Mucosa of descending colon (tissue), 3 donors: ENCODE measurements at regions of chr10 and their contacts with region 1.

Region 1: DNA sequence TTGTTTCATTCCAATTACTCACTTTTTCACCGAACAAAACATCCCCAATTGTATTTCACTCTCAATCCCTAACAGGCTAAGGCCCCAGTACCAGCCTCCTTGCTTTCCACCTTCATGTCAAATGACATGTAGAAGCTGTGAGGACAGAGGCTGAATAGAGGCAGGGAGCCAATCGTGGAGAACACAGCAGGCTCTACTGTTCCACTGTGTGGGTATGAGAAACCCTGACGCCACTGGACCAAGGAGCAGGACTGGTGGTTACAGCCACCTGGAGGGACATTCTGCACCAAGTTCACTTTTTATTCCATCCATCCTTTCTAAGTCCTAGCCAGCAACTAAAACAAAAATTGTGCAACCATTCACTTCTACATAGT is 502.8 kb downstream of the SORCS1 start:
- DNase-seq: no peak
- ATAC-seq: no peak
- H3K4me3 ChIP-seq: no peak overlapping the region
- H3K4me1 ChIP-seq: no peaks in the 10 kb centered on the region
- CTCF ChIP-seq: no peak

Region 2: GRCh38 chr10:106320078-106320477 is 341.7 kb before region 1 on chr10:
- intact Hi-C with region 1: no loop called
- DNase-seq: peak in 1 of 3 donors; percentile 37
- ATAC-seq: no peak
- H3K4me3 ChIP-seq: no peak overlapping the region
- H3K4me1 ChIP-seq: no peaks in the 10 kb centered on the region
- CTCF ChIP-seq: no peak

Region 3: DNA sequence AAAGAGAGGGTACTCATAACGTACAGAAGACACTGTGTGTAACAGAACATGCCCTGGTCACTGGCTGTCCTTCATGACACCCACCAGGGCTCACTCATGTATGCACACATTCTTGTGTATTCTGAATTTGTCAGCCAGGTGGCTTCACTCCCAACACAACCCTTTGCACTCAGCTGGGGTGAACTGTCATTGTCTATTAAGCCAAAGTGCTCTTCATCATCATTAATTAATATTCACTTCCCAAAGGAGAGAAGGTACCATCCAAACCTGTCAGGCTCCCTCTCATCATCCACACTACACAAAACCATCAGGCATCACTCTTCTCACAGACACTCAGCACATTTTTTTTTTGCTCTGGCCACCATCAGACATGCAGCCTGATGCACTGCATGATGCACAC is 32.9 kb after region 1 on chr10:
- intact Hi-C with region 1: loop called in 1 of 2 experiments (anchors 2 kb)
- DNase-seq: no peak
- ATAC-seq: no peak
- H3K4me3 ChIP-seq: no peak overlapping the region
- H3K4me1 ChIP-seq: no peaks in the 10 kb centered on the region
- CTCF ChIP-seq: no peak

Region 4: DNA sequence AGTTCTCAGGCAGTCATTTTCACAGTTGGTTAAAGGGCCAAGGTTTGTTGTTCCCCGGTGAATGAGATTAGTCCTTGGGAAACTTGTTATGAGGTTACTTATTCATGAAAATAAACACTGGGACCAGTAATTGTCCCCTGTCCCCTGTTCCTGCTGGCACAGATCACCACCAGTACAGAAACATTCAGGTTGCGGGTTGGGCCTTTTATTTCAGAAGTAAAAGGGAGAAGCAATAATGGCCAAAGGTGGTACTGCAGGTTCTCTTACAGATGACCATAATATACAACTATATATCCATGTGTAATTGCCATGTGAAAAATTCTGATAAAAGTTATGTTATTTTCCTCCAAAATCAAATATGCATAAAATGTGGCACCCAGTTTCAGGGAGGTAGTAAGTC is 60.8 kb after region 1 on chr10:
- intact Hi-C with region 1: no loop called
- DNase-seq: peak in 1 of 3 donors; percentile 38
- ATAC-seq: peak; percentile 86
- H3K4me3 ChIP-seq: no peak overlapping the region
- H3K4me1 ChIP-seq: no peaks in the 10 kb centered on the region
- CTCF ChIP-seq: no peak